IMR-90 (cell line): ENCODE measurements at regions of chr5 and their contacts with region 1.

Region 1: DNA sequence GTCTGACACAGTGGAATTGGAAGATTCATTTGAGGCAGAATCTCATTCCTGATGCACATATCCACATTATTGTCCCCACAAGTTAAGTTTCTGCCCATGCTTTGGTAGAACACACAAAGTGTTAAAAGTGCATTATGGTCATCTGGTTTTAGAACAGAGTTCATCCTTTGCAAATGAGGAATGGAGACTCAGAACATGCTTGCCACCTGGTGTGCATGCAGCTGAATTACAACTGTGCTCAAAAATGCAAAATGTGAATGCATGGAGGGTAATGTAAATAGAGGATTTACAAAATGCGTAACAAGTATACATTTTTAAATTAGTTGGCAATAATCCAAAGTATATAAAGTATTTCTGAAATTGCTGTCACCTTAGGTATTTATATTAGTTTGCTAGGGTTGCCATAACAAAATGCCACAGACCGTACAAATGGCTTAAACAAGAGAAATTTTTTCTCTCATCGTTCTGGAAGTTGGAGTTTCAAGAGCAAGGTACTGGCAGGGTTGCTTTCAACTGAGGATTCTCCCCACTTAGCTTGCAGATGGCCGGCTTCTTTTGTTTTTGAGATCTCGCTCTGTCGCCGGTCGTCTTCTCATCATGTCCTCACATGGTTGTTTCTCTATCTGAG is 671.2 kb downstream of the TAF11L14 start:
- DNase-seq: peak; percentile 39
- ATAC-seq: peak; percentile 90
- H3K4me3 ChIP-seq: no peak overlapping the region
- H3K27ac ChIP-seq: no peak overlapping the region
- H3K4me1 ChIP-seq: no peaks in the 10 kb centered on the region
- H3K27me3 ChIP-seq: no peaks in the 10 kb centered on the region
- CTCF ChIP-seq: peak; percentile 77
- POLR2A ChIP-seq: no peak
- RAD21 ChIP-seq: peak; percentile 81

Region 2: DNA sequence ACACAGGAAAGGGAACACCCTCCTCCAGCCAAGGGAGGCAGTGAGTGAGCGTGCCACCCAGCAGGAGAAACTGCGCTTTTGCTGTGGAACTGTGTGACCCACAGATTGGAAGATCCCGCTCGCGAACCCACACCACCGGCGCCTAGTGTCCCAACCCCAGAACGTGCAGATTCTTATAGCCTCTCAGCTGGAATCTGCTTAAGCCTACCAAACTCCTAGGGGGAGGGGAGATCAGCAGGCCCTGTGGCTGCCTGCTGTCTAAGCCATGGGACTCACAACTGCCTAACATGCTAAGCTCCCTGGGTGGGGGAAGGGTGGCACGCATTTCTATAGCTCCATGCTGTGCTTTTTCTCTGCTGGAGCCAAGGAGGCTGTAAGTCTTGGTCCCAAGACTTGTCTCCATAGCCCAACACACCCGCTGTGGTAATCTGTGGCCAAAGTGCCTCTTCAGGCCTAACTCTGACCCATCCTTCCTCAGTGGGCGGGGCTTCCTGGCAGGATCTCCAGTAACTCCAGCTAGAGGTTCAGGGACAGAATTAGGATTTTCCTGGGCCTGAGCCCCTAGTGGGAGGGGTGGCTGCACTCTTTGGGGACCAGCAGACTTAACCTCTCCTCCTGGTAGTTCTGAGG is 186.1 kb before region 1 on chr5:
- CTCF ChIA-PET with region 1: no interaction called
- POLR2A ChIA-PET with region 1: no interaction called
- dilution Hi-C with region 1: no loop called
- in situ Hi-C with region 1: no loop called
- intact Hi-C with region 1: loop called (anchors 5 kb)
- DNase-seq: no peak
- ATAC-seq: no peak
- H3K4me3 ChIP-seq: no peak overlapping the region
- H3K27ac ChIP-seq: no peak overlapping the region
- H3K4me1 ChIP-seq: no peaks in the 10 kb centered on the region
- H3K27me3 ChIP-seq: no peaks in the 10 kb centered on the region
- CTCF ChIP-seq: no peak
- POLR2A ChIP-seq: no peak
- RAD21 ChIP-seq: no peak